AG04449 (cell line): ENCODE measurements at regions of chr2 and their contacts with region 1.

Region 1: GRCh38 chr2:219498280-219499057 is at the start of gene GMPPA:
- DNase-seq: peak; percentile 95
- H3K4me3 ChIP-seq: peak within 1 kb of the TSS; percentile 75
- CTCF ChIP-seq: peak; percentile 9

Region 2: GRCh38 chr2:219388127-219388844 is 110.2 kb before region 1 on chr2:
- CTCF ChIA-PET with region 1: interaction called, 15 read pairs
- POLR2A ChIA-PET with region 1: no interaction called
- DNase-seq: peak; percentile 73
- H3K4me3 ChIP-seq: peak overlapping the region; percentile 56
- CTCF ChIP-seq: peak; percentile 60

Region 3: DNA sequence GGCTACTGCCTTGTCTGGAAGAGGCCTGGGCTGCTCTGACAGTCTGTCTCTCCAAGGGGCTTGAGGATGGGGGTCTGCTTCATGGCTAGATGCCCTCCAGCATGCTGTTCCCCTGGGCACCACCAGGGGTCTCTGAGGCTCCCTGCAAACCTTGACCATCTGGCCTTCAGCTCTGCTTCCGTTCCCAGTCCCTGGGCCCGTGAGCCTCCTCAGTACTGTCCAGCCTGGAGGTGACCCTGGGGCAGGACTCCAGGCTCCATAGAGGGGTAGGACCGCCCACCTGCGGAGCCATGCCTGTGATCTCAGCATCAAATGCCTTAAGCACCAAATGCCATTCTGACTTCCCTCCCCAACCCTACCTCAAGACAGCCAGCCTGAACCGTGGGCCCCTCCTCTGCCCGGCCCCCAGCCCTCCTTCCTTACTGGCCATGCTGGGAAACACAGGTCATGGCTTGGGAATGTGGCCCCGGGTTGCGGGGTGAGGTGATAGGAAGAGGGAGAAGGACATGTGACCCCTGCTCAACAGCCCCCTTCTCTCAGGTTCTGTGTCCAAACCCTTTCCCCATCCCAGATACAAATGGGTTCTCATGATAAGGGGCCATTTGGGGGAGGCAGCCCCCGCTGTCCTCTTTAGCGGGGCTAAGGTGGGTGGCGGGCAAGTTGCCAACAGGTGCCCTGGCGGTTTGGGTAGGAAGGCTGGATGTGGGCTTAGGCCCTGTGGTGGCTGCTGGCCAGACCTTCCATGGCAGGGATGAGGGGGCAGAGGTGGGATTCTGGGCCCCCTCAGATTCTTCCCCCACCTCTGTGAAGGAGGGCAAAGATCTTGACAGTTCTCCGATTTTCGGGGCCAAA is 38.8 kb before region 1 on chr2:
- CTCF ChIA-PET with region 1: interaction called, 14 read pairs
- POLR2A ChIA-PET with region 1: interaction called, 9 read pairs
- DNase-seq: no peak
- H3K4me3 ChIP-seq: no peak overlapping the region
- CTCF ChIP-seq: peak; percentile 96

Region 4: DNA sequence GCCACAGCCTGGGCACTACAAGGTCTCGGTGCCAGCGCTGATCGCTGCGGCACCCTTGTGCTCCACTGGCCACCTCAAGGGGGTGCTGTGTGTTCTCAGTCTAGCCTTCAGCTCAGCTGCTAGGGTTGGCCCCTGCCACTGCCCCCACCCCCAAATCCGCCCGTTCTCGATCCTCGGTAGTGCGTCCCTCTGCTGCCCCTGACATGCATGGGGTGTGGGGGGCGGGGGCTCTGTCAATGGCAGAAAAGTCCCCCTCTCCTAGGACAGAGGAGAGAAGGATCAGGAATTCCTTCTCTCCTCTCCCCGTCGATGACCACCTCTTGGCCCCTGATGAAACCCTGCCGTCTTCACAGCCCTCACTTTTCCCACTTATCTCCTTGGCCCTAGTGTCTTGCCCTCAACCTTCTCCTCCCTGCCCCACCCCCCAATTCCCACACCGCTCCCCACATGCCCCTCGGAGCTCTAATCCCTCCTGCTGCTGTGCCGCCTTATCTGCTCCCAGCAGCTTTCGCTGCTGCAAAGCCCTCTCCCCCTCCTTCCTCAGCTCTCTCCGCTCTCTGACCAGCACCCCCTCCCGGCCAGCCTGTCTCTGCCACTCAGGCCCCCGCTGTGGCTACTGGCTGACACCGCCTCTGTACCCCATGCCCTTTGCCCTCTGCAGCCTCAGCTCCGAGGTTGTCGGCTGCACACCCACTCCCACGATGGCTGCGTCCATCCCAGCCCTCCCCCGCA is 11.5 kb after region 1 on chr2:
- CTCF ChIA-PET with region 1: interaction called, 1,084 read pairs
- POLR2A ChIA-PET with region 1: interaction called, 28 read pairs
- DNase-seq: no peak
- H3K4me3 ChIP-seq: peak overlapping the region; percentile 45
- CTCF ChIP-seq: peak; percentile 88

Region 5: GRCh38 chr2:219543601-219544358 is 45.3 kb after region 1 on chr2 and contains the starts of genes CHPF and TMEM198:
- CTCF ChIA-PET with region 1: interaction called, 14 read pairs
- POLR2A ChIA-PET with region 1: interaction called, 7 read pairs
- DNase-seq: peak; percentile 87
- H3K4me3 ChIP-seq: peak within 1 kb of the TSS; percentile 80
- CTCF ChIP-seq: no peak

Region 6: DNA sequence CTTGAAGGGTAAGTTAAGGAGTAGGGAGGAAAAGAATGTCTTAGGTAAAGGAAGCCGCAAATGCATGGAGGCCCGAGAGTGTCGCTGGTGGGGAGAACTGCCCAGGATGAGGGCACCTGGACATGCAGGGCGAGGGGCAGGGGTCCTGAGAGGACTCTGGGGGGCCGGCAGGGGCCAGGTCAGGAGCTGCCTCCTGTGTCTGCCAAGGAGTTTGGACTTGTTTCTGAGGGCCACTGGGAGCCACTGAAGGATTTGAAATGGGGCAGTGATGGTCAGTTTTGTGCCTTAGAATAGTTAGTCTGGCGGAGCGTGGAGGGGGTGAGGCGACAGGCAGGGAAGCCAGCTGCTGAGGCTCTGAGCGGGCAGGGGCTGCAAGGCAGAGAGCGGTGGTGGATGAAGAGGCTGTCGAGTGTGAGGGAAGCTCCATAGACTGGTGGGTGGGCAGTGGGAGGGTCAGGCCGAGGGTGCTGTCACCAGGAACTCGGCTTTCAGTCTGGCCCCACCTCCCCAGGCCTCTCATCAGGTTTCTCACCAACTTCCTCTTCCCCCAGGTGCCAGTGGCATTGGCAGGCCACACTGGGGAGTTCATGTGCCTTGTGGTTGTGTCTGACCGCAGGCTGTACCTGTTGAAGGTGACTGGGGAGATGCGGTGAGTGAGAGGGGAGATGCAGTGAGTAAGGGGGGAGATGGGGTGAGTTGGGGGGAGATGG is 114.3 kb after region 1 on chr2:
- CTCF ChIA-PET with region 1: no interaction called
- POLR2A ChIA-PET with region 1: no interaction called
- DNase-seq: no peak
- H3K4me3 ChIP-seq: no peak overlapping the region
- CTCF ChIP-seq: no peak